ENCODE measurements at regions of chr2 and their contacts with region 1.

Region 1: GRCh38 chr2:173210270-173211196 is 134.9 kb downstream of the MAP3K20 start:
- DNase-seq: peak; percentile 34 to 50 (median 47)
- H3K4me3 ChIP-seq: no peak overlapping the region
- H3K4me3 Mint-ChIP-seq: no peak overlapping the region
- H3K27ac ChIP-seq: no peak overlapping the region
- H3K27ac Mint-ChIP-seq: peak overlapping the region in 1 of 7 donors; percentile 28
- H3K4me1 ChIP-seq: no peaks in the 10 kb centered on the region
- H3K4me1 Mint-ChIP-seq: peaks cover 0 to 2% (median 0%) of the 10 kb centered on the region in 4 donors
- H3K27me3 ChIP-seq: no peaks in the 10 kb centered on the region
- H3K27me3 Mint-ChIP-seq: peaks cover 3 to 4% of the 10 kb centered on the region in 2 donors

Region 2: GRCh38 chr2:173037245-173038120 is 173.1 kb before region 1 on chr2:
- CTCF ChIA-PET with region 1: interaction called, 11 read pairs
- POLR2A ChIA-PET with region 1: no interaction called
- intact Hi-C with region 1: no loop called
- DNase-seq: no peak
- H3K4me3 ChIP-seq: no peak overlapping the region
- H3K4me3 Mint-ChIP-seq: no peak overlapping the region
- H3K27ac ChIP-seq: no peak overlapping the region
- H3K27ac Mint-ChIP-seq: no peak overlapping the region
- H3K4me1 ChIP-seq: no peaks in the 10 kb centered on the region
- H3K4me1 Mint-ChIP-seq: no peaks in the 10 kb centered on the region
- H3K27me3 ChIP-seq: no peaks in the 10 kb centered on the region
- H3K27me3 Mint-ChIP-seq: peaks cover 2 to 3% of the 10 kb centered on the region in 2 donors

Region 3: DNA sequence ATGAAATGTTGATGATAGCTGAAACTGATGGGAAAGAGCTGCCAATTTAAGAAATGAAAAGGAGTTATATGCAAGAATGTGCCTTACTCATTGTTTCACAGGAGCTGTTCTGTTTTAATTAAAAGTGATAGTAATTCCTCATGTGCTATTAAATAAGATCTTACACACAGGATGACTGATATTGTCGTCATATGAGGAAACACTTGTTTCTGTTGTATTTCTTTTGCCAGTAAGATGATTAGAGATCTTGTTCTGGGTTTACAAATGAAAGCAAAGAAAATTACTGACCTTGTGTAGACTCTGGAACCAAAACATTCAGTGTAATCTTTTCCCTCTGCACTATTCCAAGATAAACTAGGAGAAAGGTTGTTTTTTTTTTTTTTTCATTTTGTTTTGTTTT is 11.2 kb before region 1 on chr2:
- CTCF ChIA-PET with region 1: interaction called, 14 read pairs
- POLR2A ChIA-PET with region 1: no interaction called
- intact Hi-C with region 1: no loop called
- DNase-seq: no peak
- H3K4me3 ChIP-seq: no peak overlapping the region
- H3K4me3 Mint-ChIP-seq: no peak overlapping the region
- H3K27ac ChIP-seq: no peak overlapping the region
- H3K27ac Mint-ChIP-seq: no peak overlapping the region
- H3K4me1 ChIP-seq: no peaks in the 10 kb centered on the region
- H3K4me1 Mint-ChIP-seq: no peaks in the 10 kb centered on the region
- H3K27me3 ChIP-seq: no peaks in the 10 kb centered on the region
- H3K27me3 Mint-ChIP-seq: no peaks in the 10 kb centered on the region

Measured in CD4-positive, alpha-beta memory T cell (primary cell).